Activated CD4-positive, alpha-beta T cell treated with anti-CD3 and anti-CD28 coated beads, Interleukin-2, amount 10 ng/mL, durations not matched to agents 24 days and 14 days (primary cell): ENCODE measurements at regions of chr12 and their contacts with region 1.

Region 1: DNA sequence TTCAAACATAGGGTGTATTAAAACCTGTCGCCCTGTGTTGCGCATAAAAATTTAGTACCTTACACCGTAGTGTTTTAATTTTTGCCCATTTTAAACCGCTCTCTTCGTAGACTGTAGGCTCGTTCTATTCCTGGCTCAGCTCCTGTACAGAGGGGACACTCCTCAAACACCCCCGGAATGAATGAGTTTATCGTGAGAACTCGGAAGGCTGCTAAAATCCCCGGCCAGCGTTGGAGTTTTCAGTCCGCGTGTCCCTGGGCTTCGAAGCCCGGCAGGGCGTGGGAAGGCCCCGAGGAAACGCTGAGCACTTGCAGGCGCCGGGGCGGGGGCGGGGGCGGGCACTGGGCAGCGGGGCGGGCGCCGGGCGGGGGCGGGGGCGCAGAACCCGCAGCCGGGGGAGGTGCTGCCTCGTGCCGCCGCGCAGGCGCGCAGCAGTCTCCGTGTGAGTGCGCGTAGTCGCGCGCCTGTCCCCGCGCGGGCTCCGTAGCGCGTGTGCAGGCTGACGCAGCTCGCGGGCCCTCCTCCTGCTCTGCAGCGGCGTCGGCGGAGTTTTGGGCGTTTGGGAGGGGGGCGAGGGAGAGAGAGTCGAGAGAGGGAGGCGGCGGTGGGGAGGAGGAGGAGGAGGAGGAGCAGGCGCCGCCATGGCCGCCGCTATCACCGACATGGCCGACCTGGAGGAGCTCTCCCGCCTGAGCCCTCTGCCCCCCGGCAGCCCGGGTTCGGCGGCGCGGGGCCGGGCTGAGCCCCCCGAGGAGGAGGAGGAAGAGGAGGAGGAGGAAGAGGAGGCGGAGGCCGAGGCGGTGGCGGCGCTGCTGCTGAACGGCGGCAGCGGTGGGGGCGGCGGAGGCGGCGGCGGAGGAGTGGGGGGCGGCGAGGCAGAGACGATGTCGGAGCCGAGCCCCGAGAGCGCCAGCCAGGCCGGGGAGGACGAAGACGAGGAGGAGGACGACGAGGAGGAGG is at the start of gene AEBP2:
- DNase-seq: peak; percentile 97
- H3K4me3 Mint-ChIP-seq: peak within 1 kb of the TSS; percentile 100
- H3K27ac Mint-ChIP-seq: peak within 1 kb of the TSS; percentile 99
- H3K4me1 Mint-ChIP-seq: peaks cover 42% of the 10 kb centered on the region
- H3K27me3 Mint-ChIP-seq: no peaks in the 10 kb centered on the region
- total RNA-seq, gene AEBP2: 55.5 and 59.2 TPM in 2 replicates

Region 2: GRCh38 chr12:19186722-19187661 is 252.3 kb before region 1 on chr12:
- intact Hi-C with region 1: no loop called
- DNase-seq: no peak
- H3K4me3 Mint-ChIP-seq: no peak overlapping the region
- H3K27ac Mint-ChIP-seq: no peak overlapping the region
- H3K4me1 Mint-ChIP-seq: no peaks in the 10 kb centered on the region
- H3K27me3 Mint-ChIP-seq: peaks cover 7% of the 10 kb centered on the region

Region 3: GRCh38 chr12:19462406-19462805 is 23.1 kb after region 1 on chr12:
- intact Hi-C with region 1: loop called (anchors 2 kb)
- DNase-seq: no peak
- H3K4me3 Mint-ChIP-seq: no peak overlapping the region
- H3K27ac Mint-ChIP-seq: peak overlapping the region; percentile 5
- H3K4me1 Mint-ChIP-seq: peaks cover 16% of the 10 kb centered on the region
- H3K27me3 Mint-ChIP-seq: no peaks in the 10 kb centered on the region

Region 4: DNA sequence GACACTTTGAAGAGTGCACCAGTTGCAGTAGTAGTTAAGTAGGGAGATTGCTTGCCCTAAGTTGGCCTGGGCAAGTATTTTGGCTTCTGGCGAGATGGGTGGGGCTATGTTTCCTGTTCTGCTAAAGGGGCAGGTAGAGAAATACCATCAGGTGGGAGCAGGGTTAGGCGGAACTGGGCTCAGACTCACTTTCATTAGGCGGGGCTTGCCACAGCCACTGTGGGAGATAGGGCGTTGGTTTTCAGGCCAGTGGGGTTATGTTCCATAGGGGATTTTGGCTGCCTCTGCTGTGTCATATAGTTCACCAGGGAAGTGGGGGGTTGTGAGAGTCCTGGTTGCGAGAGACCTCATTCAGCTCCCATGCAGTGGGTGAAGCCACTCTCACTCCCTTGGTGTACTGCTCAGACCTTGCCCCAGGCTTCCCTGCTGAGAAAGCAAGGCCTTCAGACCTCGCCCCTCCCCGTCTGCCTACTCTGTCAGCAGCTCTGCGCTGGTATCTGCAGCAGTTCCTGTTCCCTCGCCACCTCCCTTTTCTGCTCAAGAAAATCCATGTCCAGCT is 43.3 kb after region 1 on chr12:
- intact Hi-C with region 1: loop called (anchors 2 kb)
- DNase-seq: peak; percentile 72
- H3K4me3 Mint-ChIP-seq: peak overlapping the region; percentile 39
- H3K27ac Mint-ChIP-seq: peak overlapping the region; percentile 74
- H3K4me1 Mint-ChIP-seq: peaks cover 44% of the 10 kb centered on the region
- H3K27me3 Mint-ChIP-seq: no peaks in the 10 kb centered on the region